ENCODE measurements at regions of chr11 and their contacts with region 1.

Region 1: GRCh38 chr11:27055118-27055557 is 14.5 kb downstream of the BBOX1 start:
- DNase-seq: no peak
- H3K4me3 ChIP-seq: no peak overlapping the region
- H3K27ac ChIP-seq: no peak overlapping the region
- H3K27me3 ChIP-seq: no peaks in the 10 kb centered on the region
- CTCF ChIP-seq: no peak

Region 2: GRCh38 chr11:26993965-26994457 is 61.1 kb before region 1 on chr11 and contains the start of gene FIBIN:
- intact Hi-C with region 1: loop called in 1 of 2 experiments (anchors 10 kb)
- DNase-seq: peak in 4 of 10 donors; percentile 9 to 50 (median 34)
- H3K4me3 ChIP-seq: peak within 1 kb of the TSS; percentile 6 to 67 (median 53)
- H3K27ac ChIP-seq: peak within 1 kb of the TSS in 37 of 59 donors; percentile 4 to 80 (median 55)
- H3K27me3 ChIP-seq: peaks cover 0 to 25% (median 0%) of the 10 kb centered on the region in 45 donors
- CTCF ChIP-seq: no peak
- total RNA-seq, gene FIBIN: 5.0 to 25.5 (median 11.7) TPM

Measured in dorsolateral prefrontal cortex (tissue), 120 donors.